Activated CD4-positive, alpha-beta T cell treated with anti-CD3 and anti-CD28 coated beads, Interleukin-2, amount 10 ng/mL, durations not matched to agents 7 days and 5 days (primary cell): ENCODE measurements at regions of chr11 and their contacts with region 1.

Region 1: GRCh38 chr11:75241036-75241905 is 697 bp downstream of the TPBGL start:
- DNase-seq: peak; percentile 84
- H3K4me3 Mint-ChIP-seq: peak overlapping the region; percentile 68
- H3K27ac Mint-ChIP-seq: no peak overlapping the region
- H3K4me1 Mint-ChIP-seq: peaks cover 15% of the 10 kb centered on the region
- H3K27me3 Mint-ChIP-seq: peaks cover 51% of the 10 kb centered on the region

Region 2: DNA sequence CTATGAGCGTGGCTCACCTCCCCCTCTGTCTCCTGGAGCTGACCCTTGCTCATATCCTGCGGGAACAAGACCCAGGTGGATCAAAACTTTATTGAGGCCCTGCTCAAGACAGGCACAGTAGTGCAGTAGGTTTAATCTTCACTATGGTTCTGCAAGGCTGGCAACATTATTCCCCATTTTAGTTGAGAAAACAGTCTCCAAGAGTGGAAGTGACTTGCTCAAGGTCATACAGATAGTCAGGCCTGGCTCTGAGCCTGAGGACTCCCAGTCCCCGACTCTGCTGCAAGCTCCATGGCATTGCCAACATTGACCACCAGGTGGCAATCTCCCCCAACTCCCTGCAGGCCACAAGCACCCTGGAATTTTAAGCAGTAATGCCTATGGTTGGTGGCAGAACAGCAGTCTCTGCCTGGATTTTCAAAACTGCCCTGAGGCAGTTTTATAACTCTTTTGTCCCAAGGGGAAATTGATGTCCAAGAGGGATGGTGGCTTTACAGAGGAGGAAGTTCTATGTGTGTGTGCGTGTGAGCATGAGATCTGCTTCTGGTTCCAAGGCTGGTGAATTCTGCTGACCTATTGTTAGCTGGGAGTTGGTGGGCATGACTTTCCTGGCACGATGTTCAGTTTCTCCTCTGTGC is 218.4 kb before region 1 on chr11:
- CTCF ChIA-PET with region 1: interaction called, 17 read pairs
- POLR2A ChIA-PET with region 1: no interaction called
- DNase-seq: peak; percentile 75
- H3K4me3 Mint-ChIP-seq: no peak overlapping the region
- H3K27ac Mint-ChIP-seq: no peak overlapping the region
- H3K4me1 Mint-ChIP-seq: no peaks in the 10 kb centered on the region
- H3K27me3 Mint-ChIP-seq: no peaks in the 10 kb centered on the region

Region 3: GRCh38 chr11:75142714-75143419 is 98.4 kb before region 1 on chr11:
- CTCF ChIA-PET with region 1: interaction called, 145 read pairs
- POLR2A ChIA-PET with region 1: no interaction called
- DNase-seq: peak; percentile 82
- H3K4me3 Mint-ChIP-seq: peak overlapping the region; percentile 33
- H3K27ac Mint-ChIP-seq: peak overlapping the region; percentile 85
- H3K4me1 Mint-ChIP-seq: peaks cover 45% of the 10 kb centered on the region
- H3K27me3 Mint-ChIP-seq: peaks cover 8% of the 10 kb centered on the region

Region 4: DNA sequence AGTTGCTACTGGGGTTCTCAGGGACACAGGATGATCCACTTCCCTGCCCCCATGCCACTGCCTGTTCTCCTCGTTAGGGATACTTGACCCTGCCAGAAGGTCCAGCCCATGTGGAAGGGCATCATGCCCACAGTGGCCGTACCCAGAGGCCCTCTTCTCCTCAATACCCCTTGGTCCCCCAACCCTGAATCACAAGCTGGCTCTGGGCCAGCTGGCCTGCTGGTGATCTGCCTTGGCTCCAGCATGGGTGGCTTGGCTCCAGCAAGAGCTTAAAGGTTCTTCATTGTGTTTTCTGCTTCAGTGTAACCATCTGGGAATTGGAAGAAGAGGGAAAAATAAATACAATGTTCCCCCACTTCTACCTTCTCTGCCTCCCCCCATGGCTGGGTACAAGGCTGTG is 11.8 kb before region 1 on chr11:
- CTCF ChIA-PET with region 1: interaction called, 21 read pairs
- POLR2A ChIA-PET with region 1: no interaction called
- DNase-seq: no peak
- H3K4me3 Mint-ChIP-seq: no peak overlapping the region
- H3K27ac Mint-ChIP-seq: no peak overlapping the region
- H3K4me1 Mint-ChIP-seq: no peaks in the 10 kb centered on the region
- H3K27me3 Mint-ChIP-seq: no peaks in the 10 kb centered on the region

Region 5: DNA sequence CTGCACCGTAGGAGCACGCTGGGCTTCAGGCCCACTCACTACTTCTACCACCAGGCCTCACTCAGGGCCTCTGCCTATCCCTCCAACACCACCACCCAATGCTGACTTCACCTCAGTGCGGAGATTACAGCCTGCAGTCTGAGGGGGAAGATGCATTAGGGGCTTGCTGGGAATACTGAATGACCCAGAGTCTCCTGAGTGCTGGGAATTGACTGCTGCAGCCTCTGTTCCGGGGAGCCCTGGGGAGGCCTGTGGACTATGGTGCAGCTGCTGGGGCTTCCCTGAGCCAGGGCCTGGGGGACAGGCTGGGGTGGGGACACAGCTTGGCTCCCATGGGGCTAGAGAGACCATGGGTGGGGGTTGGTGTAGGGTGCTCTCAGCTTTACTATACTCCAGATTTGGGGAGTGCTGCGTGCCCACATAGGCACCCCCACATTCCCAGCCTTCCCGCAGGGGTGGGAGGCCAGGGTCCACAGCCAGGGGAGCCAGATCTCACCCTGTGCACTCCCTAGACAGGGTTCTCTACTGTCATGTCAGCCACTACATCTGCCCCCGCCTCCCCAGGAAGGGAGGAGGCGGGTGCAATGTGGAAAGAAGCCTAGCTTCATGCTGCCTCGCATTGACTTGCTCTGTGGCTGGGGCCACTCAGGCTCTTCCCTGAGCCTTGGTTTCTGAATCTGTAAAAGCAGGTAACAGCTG is 240.1 kb after region 1 on chr11:
- CTCF ChIA-PET with region 1: no interaction called
- POLR2A ChIA-PET with region 1: no interaction called
- DNase-seq: no peak
- H3K4me3 Mint-ChIP-seq: no peak overlapping the region
- H3K27ac Mint-ChIP-seq: no peak overlapping the region
- H3K4me1 Mint-ChIP-seq: peaks cover 4% of the 10 kb centered on the region
- H3K27me3 Mint-ChIP-seq: no peaks in the 10 kb centered on the region